ENCODE measurements at regions of chr16 and their contacts with region 1.

Region 1: GRCh38 chr16:19886073-19886941 is 1.7 kb upstream of the GPRC5B start:
- DNase-seq: peak; percentile 64 to 76
- H3K4me3 ChIP-seq: peak overlapping the region; percentile 28; the same call in 1 of the 2 replicates
- H3K27ac ChIP-seq: no peak overlapping the region
- H3K4me1 ChIP-seq: no peaks in the 10 kb centered on the region
- H3K27me3 ChIP-seq: no peaks in the 10 kb centered on the region
- CTCF ChIP-seq: peak; percentile 99

Region 2: DNA sequence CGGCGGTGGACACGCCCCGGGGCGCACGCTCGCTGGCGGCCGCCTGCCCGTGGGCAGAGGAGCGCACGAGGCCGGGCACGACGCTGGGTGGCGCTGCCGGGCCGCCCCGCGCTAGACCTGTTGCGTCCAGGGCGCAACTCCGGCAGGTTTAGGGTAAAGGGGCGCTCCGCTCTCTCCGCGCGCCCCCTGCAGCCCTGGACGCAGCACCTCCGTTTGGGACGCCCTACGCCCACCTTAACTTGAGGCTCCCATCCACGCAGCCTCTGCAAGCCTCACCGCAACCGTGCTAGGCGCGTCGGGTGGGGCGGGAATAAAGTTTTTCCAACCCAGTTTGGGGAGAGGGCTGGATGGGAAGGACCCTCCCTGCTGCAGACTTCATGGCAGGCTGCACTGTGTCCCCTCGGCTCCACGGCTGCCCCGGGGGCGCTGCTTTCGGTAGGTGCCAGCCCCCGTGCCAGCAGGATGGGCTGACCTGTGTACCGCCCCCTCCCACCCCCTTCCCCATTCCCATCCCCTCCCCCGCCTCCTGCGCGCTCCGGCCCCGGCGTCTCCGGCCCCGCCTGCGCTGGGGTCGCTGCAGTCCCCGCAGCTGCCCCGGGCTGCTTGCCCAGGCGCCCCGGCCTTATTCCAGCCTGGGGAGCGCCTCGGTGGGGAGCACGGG is 718.5 kb before region 1 on chr16 and contains the start of gene SYT17:
- CTCF ChIA-PET with region 1: no interaction called
- POLR2A ChIA-PET with region 1: no interaction called
- intact Hi-C with region 1: loop called (anchors 5 kb)
- DNase-seq: peak; percentile 60 to 90
- H3K4me3 ChIP-seq: peak within 1 kb of the TSS; percentile 96
- H3K27ac ChIP-seq: 0 out of 2 replicates have a peak within 1 kb of the TSS, but pooled peaks have one; percentile 25
- H3K4me1 ChIP-seq: peaks cover 33% of the 10 kb centered on the region
- H3K27me3 ChIP-seq: no peaks in the 10 kb centered on the region
- CTCF ChIP-seq: peak; percentile 75
- total RNA-seq, gene SYT17: 36.6 and 45.2 TPM in 2 replicates

Region 3: GRCh38 chr16:19583665-19584300 is 302.5 kb before region 1 on chr16:
- CTCF ChIA-PET with region 1: interaction called, 13 read pairs
- POLR2A ChIA-PET with region 1: interaction called, 7 read pairs
- intact Hi-C with region 1: loop called (anchors 1 kb)
- DNase-seq: peak in 1 of 2 experiments; percentile 46
- H3K4me3 ChIP-seq: no peak overlapping the region
- H3K27ac ChIP-seq: no peak overlapping the region
- H3K4me1 ChIP-seq: no peaks in the 10 kb centered on the region
- H3K27me3 ChIP-seq: no peaks in the 10 kb centered on the region
- CTCF ChIP-seq: peak; percentile 91

Region 4: GRCh38 chr16:19607616-19608280 is 278.6 kb before region 1 on chr16:
- CTCF ChIA-PET with region 1: interaction called, 4 read pairs
- POLR2A ChIA-PET with region 1: interaction called, 3 read pairs
- intact Hi-C with region 1: loop called (anchors 1 kb)
- DNase-seq: peak; percentile 73 to 85
- H3K4me3 ChIP-seq: no peak overlapping the region
- H3K27ac ChIP-seq: peak overlapping the region; percentile 38; the same call in 1 of the 2 replicates
- H3K4me1 ChIP-seq: peaks cover 52% of the 10 kb centered on the region
- H3K27me3 ChIP-seq: no peaks in the 10 kb centered on the region
- CTCF ChIP-seq: no peak

Region 5: DNA sequence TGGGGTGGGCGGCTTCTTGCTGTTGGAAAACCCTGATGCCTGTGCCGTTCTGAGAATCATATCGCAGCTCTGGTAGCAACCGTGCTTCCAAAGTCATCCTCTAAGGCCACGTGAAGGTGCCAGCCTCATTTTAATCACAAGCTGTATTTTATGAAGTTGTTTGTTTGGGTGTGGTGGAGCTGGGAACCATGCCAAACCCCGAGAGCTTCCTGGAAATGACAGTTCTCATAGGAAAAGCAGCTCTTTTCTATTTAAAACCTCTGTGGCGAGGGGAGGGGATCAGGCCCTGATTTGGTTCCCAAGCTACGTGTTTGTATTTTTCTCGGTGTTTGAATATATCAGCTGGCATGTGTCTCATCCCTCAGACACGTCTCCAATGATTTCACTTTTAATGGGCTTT is 190.0 kb before region 1 on chr16:
- CTCF ChIA-PET with region 1: interaction called, 4 read pairs
- POLR2A ChIA-PET with region 1: no interaction called
- intact Hi-C with region 1: loop called (anchors 5 kb)
- DNase-seq: peak; percentile 56 to 80
- H3K4me3 ChIP-seq: no peak overlapping the region
- H3K27ac ChIP-seq: no peak overlapping the region
- H3K4me1 ChIP-seq: peaks cover 22% of the 10 kb centered on the region
- H3K27me3 ChIP-seq: no peaks in the 10 kb centered on the region
- CTCF ChIP-seq: no peak

Region 6: GRCh38 chr16:19753815-19754643 is 132.3 kb before region 1 on chr16:
- CTCF ChIA-PET with region 1: interaction called, 6 read pairs
- POLR2A ChIA-PET with region 1: no interaction called
- intact Hi-C with region 1: loop called (anchors 1 kb)
- DNase-seq: peak; percentile 49 to 91
- H3K4me3 ChIP-seq: no peak overlapping the region; the same call in 1 of the 2 replicates
- H3K27ac ChIP-seq: peak overlapping the region; percentile 93
- H3K4me1 ChIP-seq: peaks cover 58% of the 10 kb centered on the region
- H3K27me3 ChIP-seq: no peaks in the 10 kb centered on the region
- CTCF ChIP-seq: no peak

Region 7: GRCh38 chr16:19991614-19992013 is 105.3 kb after region 1 on chr16:
- CTCF ChIA-PET with region 1: no interaction called
- POLR2A ChIA-PET with region 1: no interaction called
- intact Hi-C with region 1: no loop called
- DNase-seq: no peak
- H3K4me3 ChIP-seq: no peak overlapping the region
- H3K27ac ChIP-seq: no peak overlapping the region
- H3K4me1 ChIP-seq: no peaks in the 10 kb centered on the region
- H3K27me3 ChIP-seq: peaks cover 51% of the 10 kb centered on the region
- CTCF ChIP-seq: no peak